ENCODE measurements at regions of chr1 and their contacts with region 1.

Region 1: GRCh38 chr1:161132410-161133219 is at the start of gene DEDD:
- DNase-seq: peak; percentile 80 to 93 (median 90)
- ATAC-seq: peak; percentile 97
- H3K4me3 ChIP-seq: peak within 1 kb of the TSS; percentile 96
- H3K4me3 Mint-ChIP-seq: no peak within 1 kb of the TSS
- H3K27ac ChIP-seq: peak within 1 kb of the TSS; percentile 89
- H3K27ac Mint-ChIP-seq: peak within 1 kb of the TSS in 4 of 9 donors; percentile 85 to 97 (median 94)
- H3K4me1 ChIP-seq: peaks cover 21 to 37% of the 10 kb centered on the region in 2 donors
- H3K4me1 Mint-ChIP-seq: peaks cover 29 to 49% (median 48%) of the 10 kb centered on the region in 7 donors
- H3K27me3 ChIP-seq: no peaks in the 10 kb centered on the region
- H3K27me3 Mint-ChIP-seq: no peaks in the 10 kb centered on the region
- total RNA-seq, gene DEDD: 34.3 to 43.0 (median 36.0) TPM

Region 2: GRCh38 chr1:160726498-160727315 is 405.9 kb before region 1 on chr1:
- CTCF ChIA-PET with region 1: no interaction called
- POLR2A ChIA-PET with region 1: no interaction called
- intact Hi-C with region 1: loop called in 1 of 2 experiments (anchors 10 kb)
- DNase-seq: peak in 8 of 9 donors; percentile 57 to 80 (median 73)
- ATAC-seq: peak; percentile 97
- H3K4me3 ChIP-seq: no peak overlapping the region
- H3K4me3 Mint-ChIP-seq: no peak overlapping the region
- H3K27ac ChIP-seq: no peak overlapping the region
- H3K27ac Mint-ChIP-seq: no peak overlapping the region
- H3K4me1 ChIP-seq: peaks cover 15 to 21% of the 10 kb centered on the region in 2 donors
- H3K4me1 Mint-ChIP-seq: peaks cover 12 to 29% (median 16%) of the 10 kb centered on the region in 7 donors
- H3K27me3 ChIP-seq: no peaks in the 10 kb centered on the region
- H3K27me3 Mint-ChIP-seq: no peaks in the 10 kb centered on the region

Region 3: GRCh38 chr1:161045750-161046571 is 86.7 kb before region 1 on chr1 and contains the start of gene USF1:
- CTCF ChIA-PET with region 1: interaction called, 5 read pairs
- POLR2A ChIA-PET with region 1: interaction called, 13 read pairs
- intact Hi-C with region 1: loop called in 1 of 2 experiments (anchors 1 kb)
- DNase-seq: peak; percentile 84 to 96 (median 93)
- ATAC-seq: peak; percentile 89
- H3K4me3 ChIP-seq: peak within 1 kb of the TSS; percentile 93
- H3K4me3 Mint-ChIP-seq: peak within 1 kb of the TSS; percentile 93 to 100 (median 97)
- H3K27ac ChIP-seq: peak within 1 kb of the TSS; percentile 92
- H3K27ac Mint-ChIP-seq: peak within 1 kb of the TSS; percentile 92 to 100 (median 99)
- H3K4me1 ChIP-seq: peaks cover 17 to 23% of the 10 kb centered on the region in 2 donors
- H3K4me1 Mint-ChIP-seq: peaks cover 41 to 54% (median 49%) of the 10 kb centered on the region in 7 donors
- H3K27me3 ChIP-seq: no peaks in the 10 kb centered on the region
- H3K27me3 Mint-ChIP-seq: no peaks in the 10 kb centered on the region
- total RNA-seq, gene USF1: 71.6 to 115 (median 91.7) TPM

Region 4: DNA sequence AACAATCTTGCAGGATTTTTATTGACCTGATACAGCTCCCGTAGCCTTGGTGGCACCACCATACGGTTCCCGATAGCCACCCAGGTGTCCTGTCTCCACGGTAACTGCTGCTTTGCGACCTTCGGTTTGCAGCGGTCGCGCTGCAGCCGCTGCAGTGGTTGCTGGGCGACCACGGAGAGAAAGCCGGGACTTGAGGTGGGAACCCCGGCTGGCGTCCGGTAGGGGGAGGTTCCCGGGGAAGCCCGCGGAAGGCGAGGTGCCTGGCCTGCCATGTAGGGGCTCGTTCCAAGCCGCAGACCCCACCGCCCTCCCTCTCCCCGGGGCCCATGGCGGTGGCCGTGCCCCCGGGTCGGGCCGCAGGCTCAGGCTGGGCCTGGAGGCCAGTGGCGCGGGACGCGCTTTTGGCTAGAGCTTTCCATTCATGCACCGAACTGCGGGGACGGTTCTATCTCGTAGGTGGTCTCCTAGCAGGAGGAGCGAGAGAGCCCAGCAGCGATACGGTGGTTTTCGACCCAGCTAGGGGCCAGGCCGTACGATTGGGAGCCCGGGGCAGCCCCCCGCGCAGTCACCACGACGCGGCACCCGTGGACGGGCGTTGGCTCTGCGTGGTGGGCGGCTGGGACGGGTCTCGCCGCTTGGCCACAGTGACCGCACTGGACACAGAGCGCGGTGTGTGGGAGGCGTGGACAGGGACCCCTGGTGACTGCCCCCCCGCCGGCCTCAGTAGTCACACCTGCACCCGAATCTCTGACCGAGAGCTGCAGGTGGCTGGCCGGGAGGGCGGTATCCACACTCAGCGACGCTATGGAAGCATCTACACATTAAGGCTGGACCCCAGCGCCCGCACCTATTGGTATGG is 34.2 kb before region 1 on chr1 and contains the start of gene KLHDC9:
- CTCF ChIA-PET with region 1: interaction called, 4 read pairs
- POLR2A ChIA-PET with region 1: interaction called, 5 read pairs
- intact Hi-C with region 1: loop called in 1 of 2 experiments (anchors 2 kb)
- DNase-seq: peak; percentile 29 to 68 (median 42)
- ATAC-seq: peak; percentile 57
- H3K4me3 ChIP-seq: peak within 1 kb of the TSS; percentile 81
- H3K4me3 Mint-ChIP-seq: peak within 1 kb of the TSS; percentile 81 to 94 (median 90)
- H3K27ac ChIP-seq: peak within 1 kb of the TSS; percentile 47
- H3K27ac Mint-ChIP-seq: peak within 1 kb of the TSS; percentile 87 to 100 (median 96)
- H3K4me1 ChIP-seq: peaks cover 9 to 11% of the 10 kb centered on the region in 2 donors
- H3K4me1 Mint-ChIP-seq: peaks cover 18 to 40% (median 23%) of the 10 kb centered on the region in 7 donors
- H3K27me3 ChIP-seq: no peaks in the 10 kb centered on the region
- H3K27me3 Mint-ChIP-seq: peaks cover 0 to 12% (median 0%) of the 10 kb centered on the region in 5 donors
- total RNA-seq, gene KLHDC9: 0.40 to 1.1 TPM in 2 of 5 experiments, not detected in the others

Region 5: DNA sequence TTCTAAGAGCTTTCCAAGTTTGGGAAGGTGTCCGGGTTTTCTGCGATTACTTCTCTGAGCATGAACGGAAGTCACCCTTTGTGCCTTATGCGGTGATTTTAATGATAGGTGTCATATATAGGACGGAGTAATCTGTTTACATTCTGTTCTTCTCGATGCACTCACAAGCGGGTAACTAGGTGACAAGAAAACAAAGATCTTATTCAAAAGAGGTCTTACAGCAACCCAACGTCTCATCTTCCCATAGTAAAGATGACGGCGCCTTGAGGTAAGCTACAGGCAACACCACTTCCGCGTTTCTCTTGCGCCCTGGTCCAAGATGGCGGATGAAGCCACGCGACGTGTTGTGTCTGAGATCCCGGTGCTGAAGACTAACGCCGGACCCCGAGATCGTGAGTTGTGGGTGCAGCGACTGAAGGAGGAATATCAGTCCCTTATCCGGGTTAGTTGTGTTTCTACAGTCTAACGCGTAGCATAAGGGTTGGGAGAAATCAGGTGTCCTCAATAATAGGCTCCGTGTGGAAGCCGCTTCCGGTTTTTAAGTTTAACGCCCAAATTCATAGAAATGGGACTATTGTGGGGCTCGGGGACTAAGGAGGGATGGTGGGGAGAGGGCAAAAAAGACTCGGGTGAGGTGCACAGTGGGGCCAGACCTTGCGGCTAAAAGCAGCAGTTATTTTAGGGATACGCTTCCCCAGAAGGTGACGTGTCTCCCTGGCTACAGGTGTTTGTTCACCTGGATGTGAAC is 21.2 kb after region 1 on chr1 and contains the start of gene UFC1:
- CTCF ChIA-PET with region 1: interaction called, 3 read pairs
- POLR2A ChIA-PET with region 1: interaction called, 39 read pairs
- intact Hi-C with region 1: loop called (anchors 1 kb)
- DNase-seq: peak; percentile 72 to 92 (median 87)
- ATAC-seq: peak; percentile 94
- H3K4me3 ChIP-seq: peak within 1 kb of the TSS; percentile 86
- H3K4me3 Mint-ChIP-seq: peak within 1 kb of the TSS; percentile 93 to 100 (median 100)
- H3K27ac ChIP-seq: peak within 1 kb of the TSS; percentile 88
- H3K27ac Mint-ChIP-seq: peak within 1 kb of the TSS; percentile 100
- H3K4me1 ChIP-seq: peaks cover 13 to 20% of the 10 kb centered on the region in 2 donors
- H3K4me1 Mint-ChIP-seq: peaks cover 7 to 39% (median 35%) of the 10 kb centered on the region in 7 donors
- H3K27me3 ChIP-seq: no peaks in the 10 kb centered on the region
- H3K27me3 Mint-ChIP-seq: no peaks in the 10 kb centered on the region
- total RNA-seq, gene UFC1: 83.7 to 116 (median 98.9) TPM

Region 6: GRCh38 chr1:161185282-161185682 is 52.7 kb after region 1 on chr1:
- CTCF ChIA-PET with region 1: no interaction called
- POLR2A ChIA-PET with region 1: interaction called, 8 read pairs
- intact Hi-C with region 1: loop called in 1 of 2 experiments (anchors 1 kb)
- DNase-seq: peak; percentile 38 to 92 (median 87)
- ATAC-seq: peak; percentile 88
- H3K4me3 ChIP-seq: peak overlapping the region; percentile 24
- H3K4me3 Mint-ChIP-seq: peak overlapping the region; percentile 76 to 89 (median 84)
- H3K27ac ChIP-seq: peak overlapping the region; percentile 65
- H3K27ac Mint-ChIP-seq: peak overlapping the region; percentile 92 to 99 (median 97)
- H3K4me1 ChIP-seq: peaks cover 74 to 79% of the 10 kb centered on the region in 2 donors
- H3K4me1 Mint-ChIP-seq: peaks cover 65 to 90% (median 80%) of the 10 kb centered on the region in 7 donors
- H3K27me3 ChIP-seq: no peaks in the 10 kb centered on the region
- H3K27me3 Mint-ChIP-seq: no peaks in the 10 kb centered on the region

Measured in naive thymus-derived CD4-positive, alpha-beta T cell (primary cell).